ENCODE measurements at regions of chr10 and their contacts with region 1.

Region 1: GRCh38 chr10:95363303-95363912 is 72.6 kb upstream of the PDLIM1 start:
- DNase-seq: peak; percentile 71
- ATAC-seq: peak; percentile 74
- H3K4me3 ChIP-seq: no peak overlapping the region
- H3K27ac ChIP-seq: no peak overlapping the region
- H3K4me1 ChIP-seq: peaks cover 28% of the 10 kb centered on the region
- H3K27me3 ChIP-seq: no peaks in the 10 kb centered on the region
- CTCF ChIP-seq: peak; percentile 84
- EP300 ChIP-seq: no peak
- POLR2A ChIP-seq: no peak
- RAD21 ChIP-seq: peak; percentile 83

Region 2: DNA sequence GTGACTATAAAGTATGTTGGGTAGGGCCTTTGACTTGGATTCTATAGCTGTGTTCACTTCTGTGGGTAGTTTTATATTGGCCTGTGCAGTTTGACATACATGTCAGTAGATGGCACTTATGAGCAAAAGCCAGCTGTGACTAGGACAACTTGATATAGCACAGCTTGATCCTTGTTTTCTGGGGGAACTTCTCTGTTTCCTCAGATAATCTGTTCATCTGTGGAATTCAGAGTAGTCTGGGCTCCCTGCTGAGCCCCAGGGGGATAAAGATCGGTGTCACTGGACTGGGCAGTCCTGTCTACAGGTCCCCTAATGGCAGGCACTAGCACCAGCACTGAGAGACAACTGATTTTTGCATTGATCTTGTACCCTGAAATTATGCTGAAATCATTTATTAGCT is 399.5 kb before region 1 on chr10:
- CTCF ChIA-PET with region 1: no interaction called
- POLR2A ChIA-PET with region 1: no interaction called
- in situ Hi-C with region 1: no loop called
- intact Hi-C with region 1: loop called (anchors 5 kb)
- DNase-seq: peak; percentile 45
- ATAC-seq: peak; percentile 91
- H3K4me3 ChIP-seq: no peak overlapping the region
- H3K27ac ChIP-seq: no peak overlapping the region
- H3K4me1 ChIP-seq: no peaks in the 10 kb centered on the region
- H3K27me3 ChIP-seq: no peaks in the 10 kb centered on the region
- CTCF ChIP-seq: peak; percentile 71
- EP300 ChIP-seq: no peak
- POLR2A ChIP-seq: no peak
- RAD21 ChIP-seq: no peak; the same call in 1 of the 2 replicates

Region 3: GRCh38 chr10:95035332-95036310 is 327.8 kb before region 1 on chr10:
- CTCF ChIA-PET with region 1: no interaction called
- POLR2A ChIA-PET with region 1: no interaction called
- in situ Hi-C with region 1: no loop called
- intact Hi-C with region 1: no loop called
- DNase-seq: no peak
- ATAC-seq: no peak
- H3K4me3 ChIP-seq: no peak overlapping the region
- H3K27ac ChIP-seq: no peak overlapping the region
- H3K4me1 ChIP-seq: no peaks in the 10 kb centered on the region
- H3K27me3 ChIP-seq: no peaks in the 10 kb centered on the region
- CTCF ChIP-seq: no peak
- EP300 ChIP-seq: no peak
- POLR2A ChIP-seq: no peak
- RAD21 ChIP-seq: no peak

Region 4: DNA sequence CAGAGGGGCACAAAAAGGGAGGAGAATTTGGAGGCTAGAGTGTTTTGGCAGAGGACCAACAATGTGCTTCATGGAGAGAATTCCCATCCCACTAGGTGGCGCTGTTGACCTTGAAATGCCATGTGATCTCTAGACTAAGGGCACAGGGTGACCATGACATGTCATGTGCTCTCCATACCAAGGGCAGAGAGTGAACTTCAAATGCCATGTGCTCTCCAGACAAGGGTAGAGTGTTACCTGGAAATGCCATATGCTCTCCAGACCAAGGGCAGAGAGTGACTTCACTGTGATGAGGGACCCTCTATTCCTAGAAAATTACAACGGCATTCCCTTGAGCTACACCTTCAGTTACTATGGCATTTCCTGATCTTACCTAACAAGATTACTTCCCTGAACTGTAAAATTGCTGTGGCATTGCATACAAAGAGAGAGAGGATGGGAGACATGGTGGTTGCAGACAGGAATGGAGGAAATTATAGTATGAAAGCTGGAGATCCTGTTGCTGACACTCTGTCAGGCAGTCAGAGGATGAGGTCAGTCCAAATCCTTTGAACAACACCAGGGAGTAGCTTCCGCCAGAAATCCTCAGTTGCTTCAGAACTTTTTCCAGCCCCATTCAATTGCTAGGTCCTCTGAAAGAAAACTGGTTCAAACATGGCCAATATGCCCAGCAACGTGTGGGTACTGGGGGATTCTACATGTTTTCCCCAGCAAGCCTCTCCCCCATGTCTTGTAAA is 230.2 kb before region 1 on chr10:
- CTCF ChIA-PET with region 1: interaction called, 15 read pairs
- POLR2A ChIA-PET with region 1: no interaction called
- in situ Hi-C with region 1: loop called (anchors 5 kb)
- intact Hi-C with region 1: loop called (anchors 1 kb)
- DNase-seq: peak; percentile 88
- ATAC-seq: peak; percentile 97
- H3K4me3 ChIP-seq: no peak overlapping the region
- H3K27ac ChIP-seq: no peak overlapping the region
- H3K4me1 ChIP-seq: peaks cover 37% of the 10 kb centered on the region
- H3K27me3 ChIP-seq: no peaks in the 10 kb centered on the region
- CTCF ChIP-seq: peak; percentile 98
- EP300 ChIP-seq: peak in 1 of 2 experiments; percentile 57; a peak in 1 of 4 replicates
- POLR2A ChIP-seq: no peak
- RAD21 ChIP-seq: peak; percentile 89

Region 5: GRCh38 chr10:95246579-95247051 is 116.8 kb before region 1 on chr10:
- CTCF ChIA-PET with region 1: interaction called, 53 read pairs
- POLR2A ChIA-PET with region 1: interaction called, 4 read pairs
- in situ Hi-C with region 1: no loop called
- intact Hi-C with region 1: loop called (anchors 1 kb)
- DNase-seq: peak; percentile 62
- ATAC-seq: peak; percentile 76
- H3K4me3 ChIP-seq: no peak overlapping the region
- H3K27ac ChIP-seq: peak overlapping the region; percentile 21
- H3K4me1 ChIP-seq: peaks cover 19% of the 10 kb centered on the region
- H3K27me3 ChIP-seq: no peaks in the 10 kb centered on the region
- CTCF ChIP-seq: peak; percentile 83
- EP300 ChIP-seq: no peak
- POLR2A ChIP-seq: no peak
- RAD21 ChIP-seq: peak; percentile 84

Region 6: DNA sequence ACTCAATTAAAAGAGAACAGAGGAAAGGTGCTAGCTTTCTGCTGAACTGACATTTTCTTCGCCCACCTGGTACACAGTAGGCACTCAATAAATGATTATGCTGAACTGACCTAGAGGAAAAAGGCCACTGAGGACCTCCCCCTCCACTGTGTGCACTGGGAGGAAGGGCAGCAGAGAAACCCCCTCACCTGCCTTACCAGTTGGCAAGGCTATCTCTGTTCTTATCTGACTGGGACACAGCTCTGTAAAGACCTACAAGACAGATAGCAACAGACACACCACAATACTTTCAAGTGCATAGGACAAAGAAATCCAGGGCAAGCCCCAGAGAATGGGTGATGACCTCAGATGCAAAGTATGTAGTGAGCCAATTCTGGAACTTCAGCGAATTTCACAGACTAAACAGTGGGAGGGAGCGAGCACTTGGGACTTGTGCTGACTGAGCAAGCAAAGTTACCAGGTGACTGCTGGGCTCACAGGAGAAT is 103.0 kb before region 1 on chr10:
- CTCF ChIA-PET with region 1: no interaction called
- POLR2A ChIA-PET with region 1: no interaction called
- in situ Hi-C with region 1: loop called (anchors 5 kb)
- intact Hi-C with region 1: no loop called
- DNase-seq: peak; percentile 84
- ATAC-seq: peak; percentile 67
- H3K4me3 ChIP-seq: no peak overlapping the region
- H3K27ac ChIP-seq: peak overlapping the region; percentile 55
- H3K4me1 ChIP-seq: peaks cover 48% of the 10 kb centered on the region
- H3K27me3 ChIP-seq: no peaks in the 10 kb centered on the region
- CTCF ChIP-seq: no peak
- EP300 ChIP-seq: no peak
- POLR2A ChIP-seq: no peak
- RAD21 ChIP-seq: no peak

Region 7: DNA sequence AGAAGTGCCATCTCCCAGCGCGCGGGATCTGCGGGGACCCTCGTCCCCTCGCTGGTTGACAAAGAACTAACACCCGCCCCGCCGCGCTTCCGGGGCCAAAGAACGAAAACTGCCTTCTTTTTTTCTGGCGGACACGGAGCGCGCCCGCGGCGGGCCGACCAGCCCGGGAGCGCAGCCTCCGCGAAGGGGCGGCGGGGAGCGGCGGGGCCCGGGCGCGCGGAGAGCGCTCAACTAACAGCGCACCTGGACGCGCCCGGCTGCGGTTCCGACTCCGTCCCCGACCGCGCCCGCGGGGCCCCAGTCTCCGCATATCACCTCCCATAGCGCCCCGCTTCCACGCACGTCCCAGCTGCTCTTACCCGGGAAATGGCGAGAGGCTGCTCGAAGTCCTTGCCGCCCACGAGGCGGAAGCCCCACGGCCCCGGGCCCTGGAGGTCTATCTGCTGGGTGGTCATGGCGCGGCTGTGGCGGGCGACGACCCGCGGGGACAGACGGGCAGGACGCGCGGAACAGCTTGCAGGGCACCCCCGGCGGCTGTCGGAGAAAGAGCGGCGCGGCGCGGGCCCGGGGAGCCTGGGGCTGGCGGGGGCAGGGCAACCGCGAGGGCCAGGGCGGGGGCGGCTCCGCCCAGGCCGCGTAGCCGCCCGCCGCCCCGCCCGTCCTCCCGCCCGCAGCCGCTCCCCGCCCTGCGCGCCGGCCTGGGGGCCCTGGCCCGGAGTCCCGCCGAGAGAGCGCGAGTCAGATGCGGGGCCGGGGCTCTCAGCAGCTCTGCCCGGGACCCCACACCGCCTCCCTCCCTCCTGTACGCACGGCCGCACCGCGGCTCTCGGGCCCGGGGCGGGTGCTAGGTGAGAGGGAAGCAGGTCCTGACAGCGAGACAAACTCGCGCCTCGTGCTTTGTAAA is 72.7 kb before region 1 on chr10 and contains the start of gene PDLIM1:
- CTCF ChIA-PET with region 1: no interaction called
- POLR2A ChIA-PET with region 1: no interaction called
- in situ Hi-C with region 1: loop called (anchors 5 kb)
- intact Hi-C with region 1: loop called (anchors 1 kb)
- DNase-seq: peak; percentile 55
- ATAC-seq: peak; percentile 92
- H3K4me3 ChIP-seq: peak within 1 kb of the TSS; percentile 77 to 89 (median 88)
- H3K27ac ChIP-seq: peak within 1 kb of the TSS; percentile 83
- H3K4me1 ChIP-seq: peaks cover 57% of the 10 kb centered on the region
- H3K27me3 ChIP-seq: no peaks in the 10 kb centered on the region
- CTCF ChIP-seq: peak; percentile 50
- EP300 ChIP-seq: no peak
- POLR2A ChIP-seq: peak; percentile 56 to 71; a peak in 3 of 4 replicates
- RAD21 ChIP-seq: peak; percentile 74
- total RNA-seq, gene PDLIM1: 123 and 183 TPM in 2 replicates

Region 8: DNA sequence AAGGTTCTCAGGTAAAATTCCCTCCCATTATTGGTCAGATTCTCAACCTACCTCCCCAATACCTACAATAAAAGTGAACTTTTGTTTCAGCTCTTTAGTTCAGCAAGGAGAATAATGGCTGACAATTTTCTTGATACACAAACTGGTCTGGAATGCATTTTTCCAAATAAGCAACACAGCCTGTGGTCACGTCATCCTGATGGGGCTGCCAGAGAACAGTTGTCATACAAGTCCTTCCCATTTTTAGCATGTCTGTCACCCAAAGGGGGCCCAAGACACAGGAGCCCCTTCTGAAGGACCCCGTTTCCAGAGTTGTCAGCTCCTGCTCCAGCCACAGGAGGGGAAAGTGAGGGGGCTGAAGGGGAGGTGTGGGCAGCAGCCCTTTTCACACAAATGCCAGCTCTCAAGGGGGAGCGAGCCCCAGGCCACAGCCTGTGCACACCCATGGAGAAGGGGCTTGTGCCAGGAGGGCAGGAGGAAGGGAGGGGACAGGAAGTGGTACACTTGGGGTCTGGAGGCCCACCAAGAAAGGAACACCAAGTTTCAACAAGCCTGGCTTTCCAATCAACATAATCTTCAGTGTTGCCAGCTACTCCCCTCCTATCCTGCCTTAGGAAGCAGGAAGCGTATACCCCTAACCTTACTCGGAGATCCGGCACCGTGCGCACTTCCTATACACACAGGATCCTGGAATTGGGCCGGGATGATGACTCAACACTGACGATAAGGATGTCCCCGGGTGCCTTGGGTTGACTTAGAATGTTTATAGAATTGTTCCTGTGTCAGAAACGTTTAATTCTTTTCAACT is 29.2 kb before region 1 on chr10:
- CTCF ChIA-PET with region 1: interaction called, 9 read pairs
- POLR2A ChIA-PET with region 1: no interaction called
- in situ Hi-C with region 1: no loop called
- intact Hi-C with region 1: loop called (anchors 2 kb)
- DNase-seq: no peak
- ATAC-seq: no peak
- H3K4me3 ChIP-seq: no peak overlapping the region
- H3K27ac ChIP-seq: no peak overlapping the region
- H3K4me1 ChIP-seq: peaks cover 76% of the 10 kb centered on the region
- H3K27me3 ChIP-seq: no peaks in the 10 kb centered on the region
- CTCF ChIP-seq: no peak
- EP300 ChIP-seq: no peak
- POLR2A ChIP-seq: no peak
- RAD21 ChIP-seq: no peak

Region 9: DNA sequence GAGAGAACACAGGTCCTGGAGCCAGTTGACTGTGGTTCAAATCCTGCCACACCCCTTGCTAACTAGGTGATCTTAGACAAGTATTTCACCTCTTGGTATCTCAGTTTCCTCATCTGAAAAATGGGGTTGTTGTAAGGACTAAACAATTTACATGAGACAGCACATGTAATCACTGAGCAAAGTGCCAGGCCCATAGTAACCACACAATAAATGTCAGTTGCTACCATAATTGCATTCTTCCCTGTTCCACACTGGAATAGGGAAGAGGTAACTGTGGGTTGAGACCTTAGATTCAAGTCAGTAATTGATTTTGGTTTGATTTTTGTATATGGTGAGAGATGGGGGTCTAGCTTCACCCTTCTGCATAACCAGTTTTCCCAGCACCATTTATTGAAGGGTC is 18.8 kb after region 1 on chr10:
- CTCF ChIA-PET with region 1: no interaction called
- POLR2A ChIA-PET with region 1: no interaction called
- in situ Hi-C with region 1: no loop called
- intact Hi-C with region 1: no loop called
- DNase-seq: no peak
- ATAC-seq: no peak
- H3K4me3 ChIP-seq: no peak overlapping the region
- H3K27ac ChIP-seq: no peak overlapping the region
- H3K4me1 ChIP-seq: no peaks in the 10 kb centered on the region
- H3K27me3 ChIP-seq: no peaks in the 10 kb centered on the region
- CTCF ChIP-seq: no peak
- EP300 ChIP-seq: no peak
- POLR2A ChIP-seq: no peak
- RAD21 ChIP-seq: no peak

Region 10: DNA sequence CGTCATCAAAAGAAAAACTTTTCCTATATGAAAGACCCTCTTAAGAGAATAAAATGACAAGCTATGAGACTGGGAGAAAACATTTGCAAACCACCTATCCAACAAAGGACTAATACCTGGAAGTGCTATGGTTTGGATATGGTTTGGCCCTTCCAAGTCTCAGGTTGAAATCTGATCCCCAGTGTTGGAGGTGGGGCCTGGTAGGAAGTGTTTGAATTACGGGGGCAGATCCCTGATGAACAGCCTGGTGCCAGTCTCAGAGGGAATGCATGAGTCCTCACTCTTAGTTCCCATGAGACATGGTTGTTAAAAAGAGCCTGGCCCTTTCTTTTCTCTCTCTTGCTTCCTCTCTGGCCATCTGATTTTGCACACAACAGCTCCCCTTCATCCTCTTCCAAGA is 286.8 kb after region 1 on chr10:
- CTCF ChIA-PET with region 1: no interaction called
- POLR2A ChIA-PET with region 1: no interaction called
- in situ Hi-C with region 1: no loop called
- intact Hi-C with region 1: no loop called
- DNase-seq: no peak
- ATAC-seq: no peak
- H3K4me3 ChIP-seq: no peak overlapping the region
- H3K27ac ChIP-seq: no peak overlapping the region
- H3K4me1 ChIP-seq: peaks cover 81% of the 10 kb centered on the region
- H3K27me3 ChIP-seq: no peaks in the 10 kb centered on the region
- CTCF ChIP-seq: no peak
- EP300 ChIP-seq: no peak
- POLR2A ChIP-seq: no peak
- RAD21 ChIP-seq: no peak